MCF 10A (cell line): ENCODE measurements at regions of chr5 and their contacts with region 1.

Region 1: GRCh38 chr5:146675636-146676035 is 159.6 kb upstream of the GPR151 start:
- DNase-seq: no peak
- H3K4me3 Mint-ChIP-seq: no peak overlapping the region
- H3K27ac Mint-ChIP-seq: no peak overlapping the region
- H3K4me1 Mint-ChIP-seq: no peaks in the 10 kb centered on the region
- H3K27me3 Mint-ChIP-seq: no peaks in the 10 kb centered on the region
- CTCF ChIP-seq: no peak

Region 2: DNA sequence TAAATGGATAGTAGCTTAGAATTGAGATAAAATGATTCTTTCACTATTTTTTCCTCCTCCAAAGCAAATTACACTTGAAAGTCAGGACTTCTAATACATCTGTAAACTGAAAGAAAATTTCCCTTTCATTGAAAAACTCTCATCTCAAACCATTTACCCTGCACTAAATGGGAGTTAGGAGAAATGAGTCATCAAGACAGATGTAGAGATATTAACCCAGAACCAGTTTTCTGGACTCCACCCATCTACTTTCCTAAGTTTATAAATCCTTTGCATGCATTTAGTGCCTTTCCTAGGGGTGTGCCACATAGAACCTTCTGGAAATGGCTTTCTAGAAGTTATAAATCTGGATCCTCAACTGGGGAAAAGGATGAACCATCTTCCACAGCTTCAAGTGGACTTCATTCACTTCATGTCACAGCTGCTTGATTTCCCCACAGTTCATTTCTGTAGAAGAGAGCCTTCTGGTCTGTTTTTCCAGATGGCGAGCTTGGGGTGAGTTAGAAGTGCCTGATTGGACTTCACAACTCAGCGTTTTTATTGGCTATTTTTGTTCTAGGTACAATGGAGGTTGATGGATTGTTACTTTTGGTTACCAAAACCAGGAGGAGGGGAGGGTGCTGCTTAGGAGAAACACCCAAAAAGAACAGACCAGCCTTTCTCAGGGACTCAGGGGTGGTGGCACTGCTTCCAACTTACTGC is 87.2 kb before region 1 on chr5:
- CTCF ChIA-PET with region 1: no interaction called
- POLR2A ChIA-PET with region 1: no interaction called
- intact Hi-C with region 1: no loop called
- DNase-seq: peak; percentile 11
- H3K4me3 Mint-ChIP-seq: no peak overlapping the region
- H3K27ac Mint-ChIP-seq: no peak overlapping the region
- H3K4me1 Mint-ChIP-seq: peaks cover 6% of the 10 kb centered on the region
- H3K27me3 Mint-ChIP-seq: peaks cover 26% of the 10 kb centered on the region
- CTCF ChIP-seq: no peak

Region 3: GRCh38 chr5:146620669-146621051 is 55.0 kb before region 1 on chr5:
- CTCF ChIA-PET with region 1: no interaction called
- POLR2A ChIA-PET with region 1: no interaction called
- intact Hi-C with region 1: no loop called
- DNase-seq: no peak
- H3K4me3 Mint-ChIP-seq: no peak overlapping the region
- H3K27ac Mint-ChIP-seq: no peak overlapping the region
- H3K4me1 Mint-ChIP-seq: no peaks in the 10 kb centered on the region
- H3K27me3 Mint-ChIP-seq: peaks cover 33% of the 10 kb centered on the region
- CTCF ChIP-seq: no peak

Region 4: DNA sequence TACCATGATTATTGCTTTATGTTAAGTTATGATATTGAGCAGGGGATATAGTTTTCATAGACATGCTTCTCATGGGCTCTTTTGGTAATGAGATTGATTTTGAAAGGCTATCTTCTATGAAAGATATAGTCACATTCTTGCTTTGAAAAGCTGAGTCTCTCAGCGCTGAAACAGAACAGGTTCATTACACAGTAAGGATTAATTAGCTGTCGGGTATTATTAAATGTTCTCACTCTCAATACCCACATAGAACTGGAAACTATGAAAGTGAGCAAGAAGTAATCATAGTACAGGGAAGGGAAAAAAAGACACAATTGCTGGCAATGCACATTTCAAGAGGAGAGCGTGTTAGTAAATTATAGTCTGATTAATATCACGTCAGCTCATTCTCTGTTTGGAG is 12.0 kb after region 1 on chr5:
- CTCF ChIA-PET with region 1: interaction called, 10 read pairs
- POLR2A ChIA-PET with region 1: interaction called, 3 read pairs
- intact Hi-C with region 1: no loop called
- DNase-seq: no peak
- H3K4me3 Mint-ChIP-seq: no peak overlapping the region
- H3K27ac Mint-ChIP-seq: no peak overlapping the region
- H3K4me1 Mint-ChIP-seq: no peaks in the 10 kb centered on the region
- H3K27me3 Mint-ChIP-seq: no peaks in the 10 kb centered on the region
- CTCF ChIP-seq: no peak

Region 5: DNA sequence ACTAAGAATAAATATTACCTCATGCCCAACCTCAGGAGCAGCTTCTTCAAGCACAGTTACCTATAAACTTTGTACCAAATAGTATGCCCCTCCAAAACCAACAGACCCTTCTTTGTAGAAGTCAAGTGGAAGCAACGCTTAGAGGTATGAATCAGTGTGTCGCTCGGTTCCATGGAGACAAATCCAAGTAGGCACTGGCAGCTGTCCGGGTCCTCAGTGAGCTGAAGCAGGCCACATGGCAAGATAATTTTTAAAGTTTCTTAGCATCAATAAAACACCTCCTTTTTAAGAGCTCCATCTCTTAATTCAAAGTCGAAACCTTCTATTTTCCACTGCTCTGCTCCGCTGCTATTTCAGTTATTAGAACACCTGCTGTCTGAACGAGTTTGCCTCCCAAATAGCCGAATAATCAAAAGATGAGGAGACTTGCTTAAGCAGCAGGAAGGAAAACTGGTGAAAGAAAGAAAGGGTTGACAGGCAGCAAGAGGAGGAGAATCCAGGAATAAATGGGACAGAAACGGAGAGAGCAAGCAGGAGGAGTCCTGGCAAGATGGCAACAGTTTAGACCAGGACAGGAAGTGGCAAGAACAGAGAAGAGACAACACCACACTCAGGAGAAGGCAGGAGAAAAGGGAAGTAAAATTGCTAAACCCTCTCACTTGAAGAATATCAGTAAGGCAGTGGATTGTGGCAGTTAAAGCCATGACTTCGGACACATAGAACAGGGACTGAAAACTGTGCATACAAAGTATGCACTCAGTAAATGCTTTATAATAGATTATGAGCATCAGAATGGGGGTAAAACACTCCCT is 137.9 kb after region 1 on chr5:
- CTCF ChIA-PET with region 1: no interaction called
- POLR2A ChIA-PET with region 1: no interaction called
- intact Hi-C with region 1: no loop called
- DNase-seq: no peak
- H3K4me3 Mint-ChIP-seq: no peak overlapping the region
- H3K27ac Mint-ChIP-seq: no peak overlapping the region
- H3K4me1 Mint-ChIP-seq: no peaks in the 10 kb centered on the region
- H3K27me3 Mint-ChIP-seq: no peaks in the 10 kb centered on the region
- CTCF ChIP-seq: no peak

Region 6: DNA sequence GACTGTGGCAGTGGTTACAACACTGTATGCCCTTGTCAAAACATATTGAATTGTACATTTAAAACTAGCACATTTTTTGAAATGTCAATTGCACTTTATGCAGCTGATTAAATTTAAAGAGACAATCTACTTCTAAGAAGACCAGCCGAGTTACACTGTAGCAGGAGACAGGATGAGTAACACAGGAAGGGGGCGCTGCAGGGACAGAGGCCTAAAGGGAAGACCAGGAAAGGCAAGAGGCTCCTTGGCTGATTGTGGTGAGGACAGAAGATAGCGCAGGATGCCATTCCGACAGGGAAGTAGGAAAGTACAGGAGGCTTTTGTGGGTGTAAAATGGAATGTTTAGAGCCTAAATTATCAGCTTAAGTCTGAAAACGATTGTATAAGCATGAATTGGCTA is 231.2 kb after region 1 on chr5:
- CTCF ChIA-PET with region 1: no interaction called
- POLR2A ChIA-PET with region 1: no interaction called
- intact Hi-C with region 1: no loop called
- DNase-seq: peak; percentile 30
- H3K4me3 Mint-ChIP-seq: no peak overlapping the region
- H3K27ac Mint-ChIP-seq: no peak overlapping the region
- H3K4me1 Mint-ChIP-seq: peaks cover 9% of the 10 kb centered on the region
- H3K27me3 Mint-ChIP-seq: no peaks in the 10 kb centered on the region
- CTCF ChIP-seq: no peak